Activated B cell treated with CpG ODN at 0.5 μM for 24 hours (primary cell): ENCODE measurements at regions of chr1 and their contacts with region 1.

Region 1: DNA sequence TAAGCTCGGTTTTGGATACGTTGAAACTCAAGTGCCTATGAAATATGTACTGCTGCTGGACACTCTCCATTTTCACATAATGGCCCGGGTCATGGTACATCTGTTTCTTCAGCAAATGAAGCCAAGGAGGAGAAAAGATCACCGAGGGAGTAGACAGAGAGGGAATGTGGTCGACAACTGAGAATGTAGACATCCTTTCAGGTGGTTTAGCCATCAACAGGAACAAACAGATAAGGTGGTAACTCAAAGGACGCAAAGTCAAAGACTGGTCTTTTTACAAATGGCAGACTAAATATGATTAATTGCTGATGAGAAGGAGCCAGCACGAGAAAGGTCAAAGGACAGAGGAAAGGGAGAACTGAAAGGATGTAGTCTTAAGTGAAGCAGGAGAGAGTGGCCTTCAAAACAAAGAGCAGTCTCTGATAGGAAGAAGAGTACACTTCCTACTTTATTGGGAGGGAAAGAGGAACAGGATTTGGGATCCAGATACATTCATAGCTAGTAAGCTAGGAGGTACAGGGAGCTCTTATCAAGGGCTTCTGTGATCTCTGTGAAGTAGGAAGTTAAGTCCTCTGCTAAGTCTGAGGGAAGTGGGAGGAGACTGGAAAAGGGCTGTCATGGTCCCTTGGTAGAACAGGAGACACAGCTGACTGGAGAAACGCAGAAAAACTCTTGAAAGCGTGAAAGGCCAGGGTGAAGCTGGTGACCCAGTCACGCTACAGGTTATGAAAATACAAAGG is 28.3 kb downstream of the NUP133 start:
- DNase-seq: peak; percentile 25
- ATAC-seq: peak; percentile 85
- H3K4me3 Mint-ChIP-seq: peak overlapping the region; percentile 33
- H3K27ac Mint-ChIP-seq: peak overlapping the region; percentile 89
- H3K4me1 Mint-ChIP-seq: peaks cover 46% of the 10 kb centered on the region
- H3K27me3 Mint-ChIP-seq: no peaks in the 10 kb centered on the region
- CTCF ChIP-seq: no peak

Region 2: DNA sequence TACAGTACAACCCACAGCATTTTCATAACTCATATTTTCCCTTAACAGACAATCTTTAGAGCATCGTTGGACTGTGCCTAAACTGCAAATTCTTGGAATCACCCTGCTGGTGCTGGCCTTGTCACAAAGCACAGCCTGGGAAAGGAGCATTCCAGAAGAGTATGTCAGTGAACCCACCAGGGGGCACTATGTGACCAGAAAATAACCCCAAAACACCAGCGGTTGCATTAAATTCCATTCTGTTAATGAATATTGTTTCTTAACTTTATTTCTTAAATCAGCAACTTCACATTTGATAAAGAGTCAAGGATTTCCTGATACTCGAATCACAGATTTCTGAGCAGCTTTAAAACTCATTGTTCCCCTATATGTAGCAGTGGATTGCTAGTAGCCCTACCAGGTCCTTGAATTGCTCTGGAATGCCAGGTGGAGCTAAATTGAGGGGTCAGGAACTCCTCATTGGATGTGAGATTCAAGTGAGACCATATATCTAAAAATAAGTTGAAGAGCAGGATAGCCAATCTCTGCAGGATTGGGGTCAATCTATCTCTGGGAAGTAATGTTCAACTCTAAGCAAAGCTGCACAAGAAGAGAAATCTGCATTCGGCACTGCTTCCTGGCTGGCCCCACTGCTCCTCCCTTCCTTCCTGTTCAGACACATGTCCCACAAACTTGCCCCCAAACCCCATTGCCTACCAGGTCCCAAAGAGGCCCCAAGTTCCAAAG is 221.6 kb before region 1 on chr1:
- CTCF ChIA-PET with region 1: interaction called, 162 read pairs
- POLR2A ChIA-PET with region 1: interaction called, 17 read pairs
- intact Hi-C with region 1: loop called (anchors 1 kb)
- DNase-seq: no peak
- ATAC-seq: peak; percentile 64
- H3K4me3 Mint-ChIP-seq: no peak overlapping the region
- H3K27ac Mint-ChIP-seq: no peak overlapping the region
- H3K4me1 Mint-ChIP-seq: peaks cover 11% of the 10 kb centered on the region
- H3K27me3 Mint-ChIP-seq: no peaks in the 10 kb centered on the region
- CTCF ChIP-seq: peak; percentile 36

Region 3: GRCh38 chr1:229341774-229342655 is 137.8 kb before region 1 on chr1:
- CTCF ChIA-PET with region 1: no interaction called
- POLR2A ChIA-PET with region 1: interaction called, 24 read pairs
- intact Hi-C with region 1: loop called (anchors 1 kb)
- DNase-seq: peak; percentile 85
- ATAC-seq: peak; percentile 82
- H3K4me3 Mint-ChIP-seq: peak overlapping the region; percentile 91
- H3K27ac Mint-ChIP-seq: peak overlapping the region; percentile 80
- H3K4me1 Mint-ChIP-seq: peaks cover 38% of the 10 kb centered on the region
- H3K27me3 Mint-ChIP-seq: peaks cover 8% of the 10 kb centered on the region
- CTCF ChIP-seq: no peak

Region 4: DNA sequence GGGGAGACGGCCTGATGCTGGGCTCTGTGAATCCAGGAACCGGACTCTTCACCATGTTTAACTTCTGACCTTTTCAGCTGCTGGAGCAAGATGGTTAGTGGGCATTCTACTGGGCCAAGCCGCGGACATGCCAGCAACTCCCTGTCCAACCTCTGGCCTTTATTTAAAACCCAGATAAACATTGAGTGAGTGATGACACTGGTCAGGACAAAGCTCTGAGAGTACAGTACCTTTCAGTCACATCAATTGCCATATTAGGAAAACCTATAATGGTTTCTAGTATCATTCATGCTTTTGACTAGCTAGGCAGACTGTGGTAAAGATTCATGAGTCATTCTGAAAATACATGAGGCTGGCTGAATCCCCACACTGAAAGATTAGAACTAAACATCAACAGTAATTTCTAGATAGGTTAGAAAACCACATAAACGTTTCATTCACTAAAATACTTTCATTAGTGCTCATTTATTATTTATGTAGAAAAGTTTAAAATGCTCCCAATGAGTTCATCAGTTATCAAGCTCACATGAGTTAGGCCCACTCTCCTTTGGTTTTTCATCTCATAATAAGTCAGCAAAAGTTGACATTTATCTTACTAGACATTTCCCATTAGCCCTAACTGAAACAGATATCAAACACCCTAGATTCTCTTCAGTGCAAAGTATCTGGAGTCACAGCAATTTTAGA is 38.8 kb before region 1 on chr1:
- CTCF ChIA-PET with region 1: interaction called, 5 read pairs
- POLR2A ChIA-PET with region 1: interaction called, 10 read pairs
- intact Hi-C with region 1: loop called (anchors 1 kb)
- DNase-seq: no peak
- ATAC-seq: peak; percentile 78
- H3K4me3 Mint-ChIP-seq: no peak overlapping the region
- H3K27ac Mint-ChIP-seq: peak overlapping the region; percentile 67
- H3K4me1 Mint-ChIP-seq: peaks cover 8% of the 10 kb centered on the region
- H3K27me3 Mint-ChIP-seq: no peaks in the 10 kb centered on the region
- CTCF ChIP-seq: no peak

Region 5: GRCh38 chr1:229507951-229508822 is 28.4 kb after region 1 on chr1 and contains the start of gene NUP133:
- CTCF ChIA-PET with region 1: interaction called, 16 read pairs
- POLR2A ChIA-PET with region 1: interaction called, 47 read pairs
- intact Hi-C with region 1: loop called (anchors 1 kb)
- DNase-seq: peak; percentile 97
- ATAC-seq: peak; percentile 92
- H3K4me3 Mint-ChIP-seq: peak within 1 kb of the TSS; percentile 90
- H3K27ac Mint-ChIP-seq: peak within 1 kb of the TSS; percentile 97
- H3K4me1 Mint-ChIP-seq: peaks cover 26% of the 10 kb centered on the region
- H3K27me3 Mint-ChIP-seq: peaks cover 1% of the 10 kb centered on the region
- CTCF ChIP-seq: no peak
- total RNA-seq, gene NUP133: 49.6 and 56.2 TPM in 2 replicates

Region 6: DNA sequence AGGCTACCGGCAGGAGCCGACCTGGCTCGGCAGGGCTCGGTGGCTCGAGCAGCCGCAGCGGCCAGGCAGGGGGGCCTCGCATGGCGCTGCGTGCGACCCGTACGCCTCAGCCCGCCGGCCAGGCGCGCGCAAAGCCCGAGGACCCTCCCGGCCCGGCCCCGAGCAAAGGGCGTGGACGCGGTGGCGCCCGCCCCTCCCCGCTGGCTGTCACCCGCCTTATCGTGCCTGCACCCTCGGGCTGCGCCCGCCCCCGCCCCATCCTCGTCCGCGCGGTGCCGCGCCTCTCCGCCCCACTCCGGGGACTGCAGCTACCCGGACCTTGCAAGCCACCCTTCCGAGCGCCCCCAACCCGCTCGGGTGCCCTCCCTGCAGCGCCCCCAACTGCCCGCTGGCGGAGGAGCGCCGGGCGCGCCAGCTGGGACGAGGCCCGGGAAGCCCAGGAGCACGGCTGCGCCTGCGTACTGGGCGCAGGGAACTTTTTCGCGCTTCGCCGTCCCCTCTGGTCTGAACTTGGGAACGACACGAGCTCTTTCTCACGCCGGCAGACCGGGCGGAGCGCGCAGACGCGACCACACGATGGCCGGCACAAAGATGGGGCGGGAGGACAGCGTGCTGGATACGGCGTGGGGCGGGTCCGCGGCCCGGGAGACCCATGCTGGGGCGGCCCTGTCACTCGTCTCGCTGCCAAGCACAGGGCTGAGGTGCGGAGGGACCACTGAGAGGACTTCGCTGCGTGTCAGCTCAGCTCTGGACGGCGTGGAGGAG is 78.9 kb after region 1 on chr1 and contains the start of gene ABCB10:
- CTCF ChIA-PET with region 1: interaction called, 4 read pairs
- POLR2A ChIA-PET with region 1: interaction called, 4 read pairs
- intact Hi-C with region 1: loop called (anchors 1 kb)
- DNase-seq: peak; percentile 91
- ATAC-seq: peak; percentile 80
- H3K4me3 Mint-ChIP-seq: peak within 1 kb of the TSS; percentile 95
- H3K27ac Mint-ChIP-seq: peak within 1 kb of the TSS; percentile 90
- H3K4me1 Mint-ChIP-seq: peaks cover 31% of the 10 kb centered on the region
- H3K27me3 Mint-ChIP-seq: no peaks in the 10 kb centered on the region
- CTCF ChIP-seq: no peak
- total RNA-seq, gene ABCB10: 11.7 and 14.5 TPM in 2 replicates

Region 7: DNA sequence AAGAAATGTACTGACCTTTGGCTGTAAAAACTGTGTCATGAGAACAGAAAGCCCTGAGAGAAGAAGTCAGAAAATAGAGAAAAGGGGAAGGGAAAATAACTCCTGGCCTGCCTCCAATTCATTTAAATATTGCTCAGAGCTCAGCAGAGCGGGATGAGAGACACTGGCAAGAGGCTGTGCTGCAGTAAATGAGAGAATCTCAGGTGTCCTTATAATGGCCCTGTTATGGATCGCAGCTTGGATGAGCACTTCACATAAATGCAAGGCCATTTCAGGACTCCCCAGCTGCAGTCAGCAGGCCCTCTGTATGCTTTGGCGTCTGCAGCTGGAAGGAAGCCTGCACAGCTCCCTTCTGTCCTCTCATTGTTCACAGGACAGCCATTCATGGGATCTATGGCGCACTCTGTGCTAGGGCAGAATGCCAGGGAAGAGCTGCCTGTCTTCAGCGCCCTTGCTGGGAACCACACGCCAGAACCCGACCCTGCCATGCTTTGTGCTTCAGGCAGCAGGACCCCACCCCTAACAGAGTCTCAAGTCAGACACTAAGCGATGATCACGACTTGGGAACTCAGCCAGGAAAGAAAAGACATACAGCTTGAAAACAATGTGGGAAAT is 99.3 kb after region 1 on chr1:
- CTCF ChIA-PET with region 1: no interaction called
- POLR2A ChIA-PET with region 1: no interaction called
- intact Hi-C with region 1: no loop called
- DNase-seq: no peak
- ATAC-seq: peak; percentile 91
- H3K4me3 Mint-ChIP-seq: peak overlapping the region; percentile 77
- H3K27ac Mint-ChIP-seq: peak overlapping the region; percentile 69
- H3K4me1 Mint-ChIP-seq: peaks cover 13% of the 10 kb centered on the region
- H3K27me3 Mint-ChIP-seq: no peaks in the 10 kb centered on the region
- CTCF ChIP-seq: no peak

Region 8: GRCh38 chr1:230090194-230090711 is 610.4 kb after region 1 on chr1:
- CTCF ChIA-PET with region 1: no interaction called
- POLR2A ChIA-PET with region 1: no interaction called
- intact Hi-C with region 1: no loop called
- DNase-seq: no peak
- ATAC-seq: no peak
- H3K4me3 Mint-ChIP-seq: no peak overlapping the region
- H3K27ac Mint-ChIP-seq: no peak overlapping the region
- H3K4me1 Mint-ChIP-seq: peaks cover 34% of the 10 kb centered on the region
- H3K27me3 Mint-ChIP-seq: no peaks in the 10 kb centered on the region
- CTCF ChIP-seq: no peak